ENCODE measurements at regions of chr17 and their contacts with region 1.

Region 1: DNA sequence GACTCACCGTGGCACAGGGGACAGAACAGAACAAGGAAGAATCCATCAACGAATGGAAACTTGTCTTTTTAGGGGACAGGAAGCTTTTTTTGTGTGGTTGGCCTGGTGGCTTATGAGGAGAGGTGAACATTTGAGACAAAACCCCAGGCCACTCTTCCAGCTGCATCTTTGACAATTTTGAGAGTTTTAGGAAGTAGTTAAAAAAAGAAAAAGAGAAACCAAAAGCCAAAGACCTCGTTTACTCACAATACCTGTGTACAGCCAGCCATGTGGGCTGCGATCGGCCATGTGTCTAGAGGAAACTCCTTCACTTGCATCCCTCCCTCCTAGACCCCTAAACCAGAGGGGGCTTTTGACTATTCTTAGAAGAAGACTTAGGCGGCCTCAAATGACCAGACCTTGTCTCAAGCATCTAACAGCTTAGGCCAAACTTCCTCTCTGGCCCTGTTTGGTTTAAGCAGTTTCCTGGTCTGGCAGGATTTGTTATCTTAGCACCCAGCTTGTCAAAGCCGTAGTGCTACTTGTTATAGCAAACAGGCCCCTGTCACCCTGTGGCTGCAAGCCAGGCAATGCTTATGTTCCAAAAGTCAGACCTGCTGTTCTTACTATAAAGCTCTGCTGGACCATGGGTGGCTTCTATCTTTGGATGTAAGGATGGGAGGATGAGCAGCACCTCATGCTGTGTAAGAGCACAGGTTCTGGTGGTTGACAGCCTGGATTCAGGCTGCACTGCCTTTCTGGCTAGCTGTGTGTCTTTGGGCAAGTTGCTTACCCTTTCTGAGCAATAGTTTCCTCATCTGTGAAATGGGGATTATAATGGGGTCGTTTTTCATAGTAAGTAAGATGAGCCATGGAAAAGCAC is 17.7 kb downstream of the KSR1 start:
- DNase-seq: peak in 6 of 9 donors; percentile 12 to 76 (median 18)
- ATAC-seq: peak; percentile 85
- H3K4me3 ChIP-seq: peak overlapping the region; percentile 11
- H3K4me3 Mint-ChIP-seq: peak overlapping the region; percentile 16 to 86 (median 64)
- H3K27ac ChIP-seq: peak overlapping the region; percentile 43
- H3K27ac Mint-ChIP-seq: peak overlapping the region; percentile 76 to 97 (median 89)
- H3K4me1 ChIP-seq: peaks cover 19 to 44% of the 10 kb centered on the region in 2 donors
- H3K4me1 Mint-ChIP-seq: peaks cover 41 to 89% (median 49%) of the 10 kb centered on the region in 7 donors
- H3K27me3 ChIP-seq: no peaks in the 10 kb centered on the region
- H3K27me3 Mint-ChIP-seq: no peaks in the 10 kb centered on the region

Region 2: DNA sequence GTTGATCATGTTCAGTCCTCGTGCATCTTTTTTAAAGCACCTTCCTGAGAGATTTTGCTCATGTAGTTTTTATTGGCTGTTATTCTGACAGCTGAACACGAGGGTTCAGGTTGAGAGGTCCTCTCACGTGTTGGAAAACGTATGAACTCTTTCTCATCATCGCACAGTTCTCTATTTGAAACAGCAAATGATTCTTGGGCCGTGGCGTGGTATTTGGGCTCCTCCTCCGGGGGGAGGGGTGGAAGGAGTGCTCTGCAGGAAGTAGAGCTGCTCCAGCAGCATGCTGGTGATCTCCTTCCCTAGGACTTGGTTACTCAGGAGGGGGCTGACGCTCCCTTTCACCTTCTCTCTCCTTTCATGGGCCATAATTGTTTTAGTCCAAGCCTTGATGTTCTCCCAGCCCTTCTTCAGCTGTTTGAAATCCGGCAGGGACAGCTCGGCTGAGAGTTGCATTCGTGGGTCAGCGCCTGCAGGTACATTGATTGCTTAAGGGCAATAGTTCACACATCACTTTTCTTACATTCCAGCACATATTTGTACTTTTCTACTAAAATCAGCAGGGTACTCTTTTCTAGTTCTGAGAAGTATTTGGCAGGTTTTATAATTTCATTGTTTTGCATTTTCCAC is 52.7 kb after region 1 on chr17:
- CTCF ChIA-PET with region 1: no interaction called
- POLR2A ChIA-PET with region 1: no interaction called
- intact Hi-C with region 1: loop called in 1 of 2 experiments (anchors 1 kb)
- DNase-seq: peak in 3 of 9 donors; percentile 4 to 60 (median 8)
- ATAC-seq: peak; percentile 79
- H3K4me3 ChIP-seq: no peak overlapping the region
- H3K4me3 Mint-ChIP-seq: peak overlapping the region in 7 of 10 donors; percentile 22 to 74 (median 43)
- H3K27ac ChIP-seq: no peak overlapping the region
- H3K27ac Mint-ChIP-seq: peak overlapping the region in 4 of 9 donors; percentile 12 to 74 (median 40)
- H3K4me1 ChIP-seq: no peaks in the 10 kb centered on the region
- H3K4me1 Mint-ChIP-seq: peaks cover 13 to 92% (median 31%) of the 10 kb centered on the region in 7 donors
- H3K27me3 ChIP-seq: no peaks in the 10 kb centered on the region
- H3K27me3 Mint-ChIP-seq: no peaks in the 10 kb centered on the region